Dendritic cell treated with granulocyte-macrophage colony-stimulating factor and Interleukin-4, amounts not matched to agents 40 ng/mL and 50 ng/mL, for 4 days (primary cell): ENCODE measurements at regions of chr10 and their contacts with region 1.

Region 1: GRCh38 chr10:45420453-45421192 is 46.6 kb downstream of the ALOX5 start:
- H3K4me3 Mint-ChIP-seq: peak overlapping the region; percentile 97
- H3K27ac Mint-ChIP-seq: peak overlapping the region; percentile 100
- H3K4me1 Mint-ChIP-seq: peaks cover 91% of the 10 kb centered on the region
- H3K27me3 Mint-ChIP-seq: no peaks in the 10 kb centered on the region

Region 2: GRCh38 chr10:45249978-45250693 is 170.5 kb before region 1 on chr10:
- intact Hi-C with region 1: loop called (anchors 10 kb)
- H3K4me3 Mint-ChIP-seq: peak overlapping the region; percentile 56
- H3K27ac Mint-ChIP-seq: peak overlapping the region; percentile 64
- H3K4me1 Mint-ChIP-seq: peaks cover 25% of the 10 kb centered on the region
- H3K27me3 Mint-ChIP-seq: peaks cover 10% of the 10 kb centered on the region

Region 3: GRCh38 chr10:45379951-45380461 is 40.6 kb before region 1 on chr10:
- intact Hi-C with region 1: loop called (anchors 1 kb)
- H3K4me3 Mint-ChIP-seq: peak overlapping the region; percentile 37
- H3K27ac Mint-ChIP-seq: peak overlapping the region; percentile 88
- H3K4me1 Mint-ChIP-seq: peaks cover 93% of the 10 kb centered on the region
- H3K27me3 Mint-ChIP-seq: no peaks in the 10 kb centered on the region

Region 4: DNA sequence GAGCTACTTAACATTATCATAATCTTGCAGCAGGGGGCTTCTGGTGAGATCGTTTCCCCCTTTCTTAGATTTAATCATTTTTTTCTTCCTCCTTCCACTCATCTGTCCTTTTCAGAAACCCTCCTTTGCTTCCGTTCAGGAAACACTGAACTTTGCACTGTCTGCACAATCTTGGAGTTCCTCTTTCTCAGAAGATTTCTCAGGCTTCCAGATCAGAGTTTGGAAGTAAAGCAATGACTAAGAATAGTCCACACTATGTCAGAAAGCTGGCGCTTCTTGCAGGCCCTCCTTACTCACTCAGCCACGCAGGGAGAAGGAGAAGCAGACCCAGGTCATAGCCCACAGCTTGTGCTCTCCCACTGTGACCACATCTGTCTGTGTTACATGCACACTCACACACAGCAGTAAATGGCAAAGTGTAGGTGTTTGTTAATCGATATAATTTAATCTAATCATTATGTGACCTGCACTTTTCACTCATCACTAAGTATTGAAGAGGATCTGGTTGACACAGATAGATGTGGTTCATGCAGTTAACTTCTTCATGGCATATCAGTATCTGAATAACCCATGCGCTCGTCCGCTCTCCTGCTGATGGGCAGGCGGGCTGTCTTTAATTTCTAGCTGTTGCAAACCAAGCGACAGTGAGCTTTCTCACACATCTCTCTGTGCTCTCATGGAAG is 16.4 kb before region 1 on chr10:
- intact Hi-C with region 1: loop called (anchors 2 kb)
- H3K4me3 Mint-ChIP-seq: peak overlapping the region; percentile 26
- H3K27ac Mint-ChIP-seq: peak overlapping the region; percentile 75
- H3K4me1 Mint-ChIP-seq: peaks cover 80% of the 10 kb centered on the region
- H3K27me3 Mint-ChIP-seq: no peaks in the 10 kb centered on the region